Endothelial cell of umbilical vein (primary cell): ENCODE measurements at regions of chr19 and their contacts with region 1.

Region 1: GRCh38 chr19:2950286-2951124 is 5.7 kb upstream of the ZNF77 start:
- DNase-seq: peak; percentile 100
- H3K4me3 ChIP-seq: peak overlapping the region; percentile 16 to 82 (median 57)
- H3K27ac ChIP-seq: peak overlapping the region; percentile 95
- H3K4me1 ChIP-seq: peaks cover 27% of the 10 kb centered on the region
- H3K27me3 ChIP-seq: no peaks in the 10 kb centered on the region
- CTCF ChIP-seq: no peak
- POLR2A ChIP-seq: peak; percentile 74

Region 2: GRCh38 chr19:2782936-2783780 is 167.3 kb before region 1 on chr19 and contains the start of gene SGTA:
- CTCF ChIA-PET with region 1: no interaction called
- POLR2A ChIA-PET with region 1: no interaction called
- dilution Hi-C with region 1: no loop called
- intact Hi-C with region 1: loop called (anchors 1 kb)
- DNase-seq: peak; percentile 99
- H3K4me3 ChIP-seq: peak within 1 kb of the TSS; percentile 83 to 89 (median 86)
- H3K27ac ChIP-seq: peak within 1 kb of the TSS; percentile 84
- H3K4me1 ChIP-seq: peaks cover 24% of the 10 kb centered on the region
- H3K27me3 ChIP-seq: no peaks in the 10 kb centered on the region
- CTCF ChIP-seq: peak; percentile 21 to 49
- POLR2A ChIP-seq: peak; percentile 84
- total RNA-seq, gene SGTA: 72.3 and 76.5 TPM in 2 replicates

Region 3: GRCh38 chr19:2900296-2901252 is 49.9 kb before region 1 on chr19 and contains the start of gene ZNF57:
- CTCF ChIA-PET with region 1: interaction called, 12 read pairs
- POLR2A ChIA-PET with region 1: interaction called, 8 read pairs
- dilution Hi-C with region 1: no loop called
- intact Hi-C with region 1: loop called (anchors 1 kb)
- DNase-seq: peak; percentile 99
- H3K4me3 ChIP-seq: peak within 1 kb of the TSS; percentile 14 to 97 (median 58)
- H3K27ac ChIP-seq: peak within 1 kb of the TSS; percentile 34
- H3K4me1 ChIP-seq: no peaks in the 10 kb centered on the region
- H3K27me3 ChIP-seq: no peaks in the 10 kb centered on the region
- CTCF ChIP-seq: no peak
- POLR2A ChIP-seq: no peak
- total RNA-seq, gene ZNF57: 3.4 and 3.6 TPM in 2 replicates

Region 4: DNA sequence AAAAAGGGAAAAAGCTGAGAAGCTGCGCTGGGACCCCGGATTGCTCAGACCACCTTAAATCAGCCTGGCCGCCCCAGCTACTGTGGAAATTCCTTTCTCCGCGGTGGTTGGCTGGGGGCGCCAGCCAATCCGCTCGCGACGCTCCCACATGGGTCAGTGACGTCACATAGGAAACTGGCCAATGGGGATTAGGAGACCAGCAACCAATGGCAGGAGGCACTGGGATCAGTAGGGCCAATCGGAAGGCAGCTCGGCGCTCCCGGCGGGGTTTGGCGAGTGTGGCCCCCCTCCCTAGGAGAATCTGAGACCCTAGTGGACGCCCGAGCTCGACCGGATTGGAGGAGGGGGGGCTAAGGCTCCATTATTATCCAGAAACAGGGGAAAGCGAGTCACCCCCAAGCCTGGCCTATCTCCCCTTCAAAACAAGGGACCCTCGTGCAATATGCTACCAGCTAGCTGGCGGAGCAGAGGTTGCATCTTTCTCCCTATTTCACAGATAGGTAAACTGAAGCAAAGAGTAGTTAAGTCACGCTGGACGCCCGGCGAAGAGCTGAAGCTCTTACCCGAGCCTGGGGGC is 85.1 kb after region 1 on chr19:
- CTCF ChIA-PET with region 1: interaction called, 18 read pairs
- POLR2A ChIA-PET with region 1: interaction called, 16 read pairs
- dilution Hi-C with region 1: no loop called
- intact Hi-C with region 1: no loop called
- DNase-seq: peak; percentile 100
- H3K4me3 ChIP-seq: peak overlapping the region; percentile 39 to 73 (median 73)
- H3K27ac ChIP-seq: peak overlapping the region; percentile 77
- H3K4me1 ChIP-seq: peaks cover 12% of the 10 kb centered on the region
- H3K27me3 ChIP-seq: peaks cover 0 to 3% of the 10 kb centered on the region in 2 experiments
- CTCF ChIP-seq: no peak
- POLR2A ChIP-seq: peak; percentile 44

Region 5: DNA sequence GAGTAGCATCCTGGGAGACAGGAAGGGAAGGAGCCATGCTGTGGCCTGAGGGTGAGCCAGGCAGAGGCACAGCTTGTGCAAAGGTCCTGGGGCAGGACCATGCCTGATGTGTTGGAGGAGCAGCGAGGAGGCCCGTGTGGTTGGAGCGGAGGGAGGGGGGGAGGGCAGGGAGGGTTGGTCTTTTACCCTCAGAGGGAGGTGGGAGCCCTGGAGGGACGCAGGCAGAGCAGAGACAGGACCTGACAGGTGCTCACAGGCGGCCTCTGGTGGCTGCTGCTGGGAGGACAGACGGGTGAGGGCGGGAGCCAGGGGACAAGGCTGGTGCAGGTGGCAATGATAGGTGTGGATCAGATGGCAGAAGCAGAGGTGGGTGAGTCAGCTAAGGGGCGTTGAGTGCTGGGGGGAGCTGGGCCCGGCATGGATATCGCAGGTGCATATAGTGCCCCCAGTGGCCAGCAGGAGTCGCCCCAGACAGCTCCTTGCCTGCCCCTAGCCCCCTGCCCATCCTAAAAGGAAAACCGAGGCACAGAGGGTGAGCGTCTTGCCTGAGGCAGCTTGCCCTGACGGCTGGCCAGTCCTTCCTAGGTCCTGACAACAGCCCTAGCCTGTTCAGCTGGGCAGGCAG is 175.5 kb after region 1 on chr19:
- CTCF ChIA-PET with region 1: interaction called, 34 read pairs
- POLR2A ChIA-PET with region 1: no interaction called
- dilution Hi-C with region 1: no loop called
- intact Hi-C with region 1: no loop called
- DNase-seq: peak; percentile 53
- H3K4me3 ChIP-seq: no peak overlapping the region
- H3K27ac ChIP-seq: no peak overlapping the region
- H3K4me1 ChIP-seq: no peaks in the 10 kb centered on the region
- H3K27me3 ChIP-seq: no peaks in the 10 kb centered on the region
- CTCF ChIP-seq: peak; percentile 75 to 90
- POLR2A ChIP-seq: no peak

Region 6: GRCh38 chr19:3163230-3163886 is 212.9 kb after region 1 on chr19:
- CTCF ChIA-PET with region 1: interaction called, 4 read pairs
- POLR2A ChIA-PET with region 1: no interaction called
- dilution Hi-C with region 1: no loop called
- intact Hi-C with region 1: loop called (anchors 1 kb)
- DNase-seq: peak; percentile 54
- H3K4me3 ChIP-seq: no peak overlapping the region
- H3K27ac ChIP-seq: no peak overlapping the region
- H3K4me1 ChIP-seq: peaks cover 6% of the 10 kb centered on the region
- H3K27me3 ChIP-seq: no peaks in the 10 kb centered on the region
- CTCF ChIP-seq: peak; percentile 79 to 97
- POLR2A ChIP-seq: no peak